WTC11 (cell line): ENCODE measurements at regions of chr14 and their contacts with region 1.

Region 1: DNA sequence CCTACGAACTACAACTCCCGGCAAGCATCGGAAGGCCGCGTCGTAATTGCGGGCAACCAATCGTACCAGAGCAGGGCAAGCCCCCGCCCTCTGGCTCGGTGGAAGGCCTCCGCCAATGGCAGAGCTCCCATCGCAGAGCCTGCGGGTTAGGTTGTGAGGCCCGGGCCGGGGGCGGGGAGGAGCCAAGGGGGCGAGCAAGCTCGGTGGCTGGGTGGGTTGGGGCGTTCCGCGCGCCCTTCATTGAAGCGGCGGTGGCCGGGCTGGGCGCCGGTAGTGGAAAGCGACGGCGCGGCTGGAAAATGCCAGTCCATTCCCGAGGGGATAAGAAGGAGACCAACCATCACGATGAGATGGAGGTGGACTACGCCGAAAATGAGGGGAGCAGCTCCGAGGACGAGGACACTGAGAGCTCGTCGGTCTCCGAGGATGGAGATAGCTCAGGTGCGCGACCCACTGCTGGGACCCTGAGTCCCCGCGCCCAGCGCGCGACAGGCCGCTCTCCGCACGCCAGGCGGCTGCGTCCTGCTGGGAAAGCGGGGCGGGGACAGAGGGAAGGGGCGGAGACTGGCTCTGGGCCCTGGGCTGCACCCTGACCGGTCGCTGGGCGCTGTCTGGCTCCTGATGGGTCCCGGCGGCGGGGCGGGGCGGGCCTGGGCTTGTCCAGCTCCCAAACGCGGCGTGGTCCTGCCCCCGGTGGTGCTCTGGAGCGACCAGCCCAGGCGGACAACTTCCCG is at the start of gene BRMS1L:
- DNase-seq: peak; percentile 98
- ATAC-seq: peak; percentile 97
- H3K4me3 Mint-ChIP-seq: peak within 1 kb of the TSS; percentile 80
- H3K27ac Mint-ChIP-seq: peak within 1 kb of the TSS; percentile 93
- H3K4me1 Mint-ChIP-seq: peaks cover 11% of the 10 kb centered on the region
- H3K27me3 Mint-ChIP-seq: no peaks in the 10 kb centered on the region
- CTCF ChIP-seq: no peak
- total RNA-seq, gene BRMS1L: 10.7 to 12.9 TPM (median 12.1 TPM) in 3 replicates

Region 2: DNA sequence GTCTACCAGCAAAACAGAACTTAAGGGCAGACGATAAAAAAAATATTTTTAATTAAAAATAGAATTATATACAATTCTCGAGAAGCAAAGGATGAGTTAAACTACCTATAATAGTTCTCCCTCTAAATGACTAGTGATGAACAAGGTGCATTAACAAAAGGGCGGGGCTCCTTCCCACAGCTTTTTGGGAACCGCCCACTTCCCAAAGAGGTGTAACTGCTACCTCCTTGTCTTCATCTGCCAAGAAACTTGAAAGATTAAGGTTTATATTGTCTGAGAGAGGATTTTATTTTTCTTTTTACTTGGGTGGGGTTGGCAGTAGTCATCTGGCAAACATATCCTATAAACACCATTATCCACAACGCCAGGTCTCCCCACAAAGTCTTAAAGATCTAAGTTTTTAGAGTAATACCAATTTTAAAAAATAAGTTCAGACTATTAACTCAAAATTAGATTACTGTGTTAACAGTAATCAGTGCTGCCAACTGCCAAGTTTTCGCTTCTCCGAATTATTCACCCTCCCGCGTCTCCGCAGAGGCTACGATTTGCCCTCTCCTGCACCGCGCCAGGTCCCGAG is 18.2 kb before region 1 on chr14:
- CTCF ChIA-PET with region 1: interaction called, 9 read pairs
- POLR2A ChIA-PET with region 1: interaction called, 12 read pairs
- DNase-seq: peak; percentile 32
- ATAC-seq: 0 out of 2 replicates have a peak, but pooled peaks have one; percentile 5
- H3K4me3 Mint-ChIP-seq: peak overlapping the region; percentile 95
- H3K27ac Mint-ChIP-seq: peak overlapping the region; percentile 76
- H3K4me1 Mint-ChIP-seq: peaks cover 15% of the 10 kb centered on the region
- H3K27me3 Mint-ChIP-seq: peaks cover 5% of the 10 kb centered on the region
- CTCF ChIP-seq: no peak

Region 3: DNA sequence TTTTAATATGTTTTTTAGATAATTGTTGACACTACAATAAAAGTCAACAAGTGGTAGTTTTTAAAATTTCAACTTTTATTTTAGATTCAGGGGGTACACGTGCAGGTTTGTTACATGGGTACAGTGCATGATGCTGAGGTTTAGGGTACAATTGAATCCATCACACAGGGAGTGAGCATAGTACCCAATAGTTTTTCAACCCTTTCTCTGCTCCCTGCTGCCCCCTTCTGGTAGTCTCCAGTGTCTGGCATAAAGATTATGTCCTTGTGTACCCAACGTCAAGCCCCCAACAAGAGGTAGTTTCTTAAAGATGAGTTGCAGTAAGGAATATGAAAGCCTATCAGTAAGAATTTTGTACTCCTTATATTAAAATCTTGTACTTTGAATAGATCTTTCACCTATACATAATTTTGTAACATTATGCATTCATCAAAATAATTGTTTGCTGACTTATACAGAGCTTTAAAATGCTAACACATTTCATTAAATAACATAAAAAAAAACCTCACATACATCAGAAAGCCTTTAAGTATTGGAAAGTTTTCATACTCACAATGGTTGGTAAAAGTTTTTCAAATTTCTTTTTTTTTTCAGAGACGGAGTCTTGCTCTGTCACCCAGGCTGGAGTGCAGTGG is 11.9 kb before region 1 on chr14:
- CTCF ChIA-PET with region 1: interaction called, 16 read pairs
- POLR2A ChIA-PET with region 1: interaction called, 12 read pairs
- DNase-seq: peak; percentile 82
- ATAC-seq: peak; percentile 92
- H3K4me3 Mint-ChIP-seq: no peak overlapping the region
- H3K27ac Mint-ChIP-seq: no peak overlapping the region
- H3K4me1 Mint-ChIP-seq: no peaks in the 10 kb centered on the region
- H3K27me3 Mint-ChIP-seq: peaks cover 5% of the 10 kb centered on the region
- CTCF ChIP-seq: peak; percentile 71